Activated CD4-positive, alpha-beta memory T cell treated with anti-CD3 and anti-CD28 coated beads for 36 hours (primary cell): ENCODE measurements at regions of chr18 and their contacts with region 1.

Region 1: GRCh38 chr18:45384137-45384961 is 230.9 kb upstream of the SLC14A2 start:
- DNase-seq: peak; percentile 44
- H3K4me3 Mint-ChIP-seq: no peak overlapping the region
- H3K27ac Mint-ChIP-seq: no peak overlapping the region
- H3K4me1 Mint-ChIP-seq: no peaks in the 10 kb centered on the region
- H3K27me3 Mint-ChIP-seq: peaks cover 19% of the 10 kb centered on the region

Region 2: GRCh38 chr18:43571078-43571689 is 1813.2 kb before region 1 on chr18:
- CTCF ChIA-PET with region 1: interaction called, 8 read pairs
- POLR2A ChIA-PET with region 1: no interaction called
- intact Hi-C with region 1: loop called (anchors 5 kb)
- DNase-seq: no peak
- H3K4me3 Mint-ChIP-seq: no peak overlapping the region
- H3K27ac Mint-ChIP-seq: no peak overlapping the region
- H3K4me1 Mint-ChIP-seq: no peaks in the 10 kb centered on the region
- H3K27me3 Mint-ChIP-seq: no peaks in the 10 kb centered on the region

Region 3: GRCh38 chr18:44895176-44895798 is 489.1 kb before region 1 on chr18:
- CTCF ChIA-PET with region 1: no interaction called
- POLR2A ChIA-PET with region 1: no interaction called
- intact Hi-C with region 1: loop called (anchors 10 kb)
- DNase-seq: peak; percentile 62
- H3K4me3 Mint-ChIP-seq: no peak overlapping the region
- H3K27ac Mint-ChIP-seq: no peak overlapping the region
- H3K4me1 Mint-ChIP-seq: peaks cover 43% of the 10 kb centered on the region
- H3K27me3 Mint-ChIP-seq: no peaks in the 10 kb centered on the region

Region 4: GRCh38 chr18:45171679-45172191 is 212.6 kb before region 1 on chr18:
- CTCF ChIA-PET with region 1: no interaction called
- POLR2A ChIA-PET with region 1: no interaction called
- intact Hi-C with region 1: no loop called
- DNase-seq: no peak
- H3K4me3 Mint-ChIP-seq: no peak overlapping the region
- H3K27ac Mint-ChIP-seq: no peak overlapping the region
- H3K4me1 Mint-ChIP-seq: no peaks in the 10 kb centered on the region
- H3K27me3 Mint-ChIP-seq: no peaks in the 10 kb centered on the region

Region 5: DNA sequence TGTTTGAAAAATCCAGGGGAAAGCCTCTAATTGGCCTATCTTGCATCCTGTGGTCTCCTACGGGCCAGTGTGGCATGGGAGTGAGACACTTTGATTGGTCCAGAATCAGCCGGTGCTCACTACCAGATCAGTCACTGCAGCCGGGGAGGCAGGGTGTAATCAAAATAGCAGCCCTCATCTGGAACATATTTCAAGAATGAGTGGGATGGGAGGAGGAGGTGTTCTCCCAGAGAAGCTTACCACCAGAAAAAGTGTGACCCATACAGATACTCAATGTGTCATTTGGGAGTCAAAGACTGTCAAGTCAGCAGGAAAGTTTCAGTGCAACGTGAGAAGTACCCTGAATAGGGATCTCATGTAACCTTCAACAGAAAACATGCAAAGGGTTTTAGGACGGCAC is 163.0 kb before region 1 on chr18:
- CTCF ChIA-PET with region 1: no interaction called
- POLR2A ChIA-PET with region 1: no interaction called
- intact Hi-C with region 1: loop called (anchors 5 kb)
- DNase-seq: no peak
- H3K4me3 Mint-ChIP-seq: no peak overlapping the region
- H3K27ac Mint-ChIP-seq: no peak overlapping the region
- H3K4me1 Mint-ChIP-seq: no peaks in the 10 kb centered on the region
- H3K27me3 Mint-ChIP-seq: peaks cover 3% of the 10 kb centered on the region

Region 6: DNA sequence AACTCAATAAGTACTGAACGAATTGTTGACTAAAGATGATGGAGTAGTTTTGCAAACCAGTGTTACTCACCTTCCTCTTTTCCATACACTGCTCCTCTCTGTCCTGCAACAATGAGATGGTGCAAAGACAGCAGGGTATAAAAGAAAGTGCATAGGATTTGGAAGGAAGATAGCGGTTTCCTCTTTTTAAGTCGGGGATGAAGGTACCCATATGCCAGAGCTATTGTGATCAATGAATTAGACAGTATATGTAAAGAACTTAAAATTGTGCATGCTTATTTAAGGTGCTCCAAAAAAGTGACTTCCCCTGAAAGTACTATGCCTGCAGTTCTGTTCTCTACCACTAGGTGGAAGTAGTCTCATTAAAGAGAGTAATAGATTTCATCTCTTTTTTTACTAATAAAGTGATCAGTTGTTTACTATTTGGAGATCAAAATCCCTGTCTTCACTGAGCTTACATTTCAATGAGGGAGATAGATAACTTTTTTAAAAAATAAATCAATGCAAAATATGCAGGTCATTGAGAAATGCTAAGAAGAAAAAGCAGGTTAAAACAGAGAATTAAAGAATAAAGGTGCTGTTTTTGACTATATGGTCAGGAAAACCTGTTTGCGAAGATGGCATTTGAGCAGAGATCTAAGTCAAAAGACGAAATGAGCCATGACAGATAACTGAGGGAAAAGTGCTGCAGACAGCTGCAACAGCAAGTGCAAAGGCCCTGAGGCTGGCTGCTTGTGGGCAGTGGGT is 108.8 kb before region 1 on chr18:
- CTCF ChIA-PET with region 1: interaction called, 36 read pairs
- POLR2A ChIA-PET with region 1: no interaction called
- intact Hi-C with region 1: loop called (anchors 1 kb)
- DNase-seq: no peak
- H3K4me3 Mint-ChIP-seq: no peak overlapping the region
- H3K27ac Mint-ChIP-seq: no peak overlapping the region
- H3K4me1 Mint-ChIP-seq: no peaks in the 10 kb centered on the region
- H3K27me3 Mint-ChIP-seq: no peaks in the 10 kb centered on the region